HCT116 (cell line): ENCODE measurements at regions of chr10 and their contacts with region 1.

Region 1: DNA sequence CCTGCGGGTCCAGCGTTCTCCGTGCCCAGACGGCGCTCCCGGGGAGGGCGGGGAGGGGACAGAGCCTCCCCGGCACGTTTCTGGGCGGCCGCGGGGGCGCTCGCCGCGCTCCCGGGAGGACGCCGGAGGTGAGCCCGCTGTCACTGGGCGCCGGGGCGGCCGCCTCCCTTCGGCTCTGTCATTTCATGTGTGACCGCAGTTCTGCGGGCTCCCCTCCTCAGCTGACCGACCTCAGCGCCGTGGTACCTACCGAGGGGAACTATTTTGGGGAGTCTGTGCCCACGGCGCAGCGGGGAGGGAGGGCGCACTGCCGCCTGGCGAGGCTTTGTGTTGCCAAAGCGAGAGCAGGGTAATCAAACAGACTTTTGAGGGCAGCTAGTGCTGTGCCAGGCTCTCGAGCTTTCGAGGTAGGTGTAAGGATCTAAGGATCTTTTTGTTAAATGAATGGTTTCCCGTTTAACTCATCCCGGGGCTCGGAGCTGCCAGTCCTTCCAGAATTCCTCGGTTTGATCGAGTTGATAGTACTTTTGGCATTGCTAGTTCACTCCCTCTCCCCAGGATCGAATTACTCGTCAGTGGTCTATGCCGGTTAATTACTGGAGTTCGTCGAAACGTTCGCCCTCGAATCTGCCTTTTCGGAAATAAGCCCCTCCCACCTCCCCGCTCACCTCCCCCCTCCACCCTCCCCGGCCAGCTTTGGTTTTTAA is 1.9 kb downstream of the ARID5B start:
- DNase-seq: peak; percentile 42
- ATAC-seq: peak; percentile 64
- H3K4me3 ChIP-seq: peak overlapping the region; percentile 64 to 75
- H3K27ac ChIP-seq: peak overlapping the region; percentile 92
- H3K4me1 ChIP-seq: peaks cover 13 to 29% of the 10 kb centered on the region in 2 experiments; a peak in 3 of 4 replicates
- H3K27me3 ChIP-seq: no peaks in the 10 kb centered on the region
- CTCF ChIP-seq: peak in 2 of 3 experiments; percentile 23 to 24; a peak in 2 of 6 replicates
- POLR2A ChIP-seq: no peak
- RAD21 ChIP-seq: no peak

Region 2: DNA sequence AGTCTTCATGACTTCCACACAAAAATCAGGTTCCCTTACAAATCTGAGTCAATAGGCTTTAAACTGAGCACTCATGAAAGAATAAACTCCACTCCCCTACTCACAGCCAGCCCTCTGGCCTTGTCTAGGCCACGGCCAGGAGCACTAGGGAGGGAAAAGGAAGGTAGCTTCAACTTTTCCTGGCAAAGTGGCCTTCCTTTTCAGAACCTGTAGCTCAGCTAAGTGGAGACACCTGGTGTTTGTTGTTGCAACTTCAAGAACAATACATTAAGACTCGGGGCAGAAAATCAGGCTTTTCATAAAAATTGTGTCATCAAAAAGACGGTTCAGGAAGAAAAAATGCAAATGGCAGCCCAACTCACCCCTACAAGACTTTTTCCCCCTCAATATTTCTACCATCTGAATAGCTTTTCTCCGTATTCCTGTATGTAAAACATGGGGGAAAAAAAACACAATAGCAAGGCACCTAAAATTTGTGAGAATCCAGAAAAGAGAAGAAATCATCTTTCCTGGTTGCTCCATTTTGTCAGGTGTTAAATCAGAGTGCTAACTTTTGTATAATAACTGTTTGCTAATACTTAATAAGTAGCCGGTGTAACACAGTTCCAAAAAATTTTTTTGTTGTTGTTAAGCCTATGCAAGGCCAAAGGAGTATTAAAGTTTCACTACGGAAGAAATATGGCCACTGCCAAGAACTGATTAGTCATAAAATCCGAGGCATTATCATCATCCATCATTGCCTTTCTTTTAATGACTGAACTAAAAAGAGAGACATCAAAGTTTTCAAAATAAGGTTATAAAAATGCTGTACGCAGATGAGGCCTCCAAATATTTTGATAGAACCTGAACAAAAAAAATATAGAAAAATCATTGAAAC is 68.1 kb before region 1 on chr10:
- CTCF ChIA-PET with region 1: interaction called, 6 read pairs
- POLR2A ChIA-PET with region 1: no interaction called
- RAD21 ChIA-PET with region 1: interaction called in 1 of 2 experiments, 3 read pairs
- intact Hi-C with region 1: loop called (anchors 5 kb)
- DNase-seq: peak; percentile 71
- ATAC-seq: peak; percentile 62
- H3K4me3 ChIP-seq: peak overlapping the region in 1 of 2 experiments; percentile 41; a peak in 1 of 4 replicates
- H3K27ac ChIP-seq: peak overlapping the region; percentile 85; the same call in 1 of the 2 replicates
- H3K4me1 ChIP-seq: peaks cover 32 to 50% of the 10 kb centered on the region in 2 experiments
- H3K27me3 ChIP-seq: no peaks in the 10 kb centered on the region
- CTCF ChIP-seq: peak; percentile 62 to 63 (median 62); a peak in 5 of 6 replicates
- POLR2A ChIP-seq: no peak
- RAD21 ChIP-seq: peak; percentile 80

Region 3: GRCh38 chr10:62268399-62269114 is 365.2 kb after region 1 on chr10 and contains the start of gene RTKN2:
- CTCF ChIA-PET with region 1: no interaction called
- POLR2A ChIA-PET with region 1: no interaction called
- RAD21 ChIA-PET with region 1: no interaction called
- intact Hi-C with region 1: no loop called
- DNase-seq: peak; percentile 74
- ATAC-seq: peak; percentile 88
- H3K4me3 ChIP-seq: peak within 1 kb of the TSS; percentile 80 to 82
- H3K27ac ChIP-seq: peak within 1 kb of the TSS; percentile 44
- H3K4me1 ChIP-seq: peaks cover 3 to 20% of the 10 kb centered on the region in 2 experiments; a peak in 3 of 4 replicates
- H3K27me3 ChIP-seq: no peaks in the 10 kb centered on the region
- CTCF ChIP-seq: no peak
- POLR2A ChIP-seq: peak; percentile 33
- RAD21 ChIP-seq: no peak
- total RNA-seq, gene RTKN2: 7.9 TPM

Region 4: GRCh38 chr10:62594093-62594520 is 690.7 kb after region 1 on chr10:
- CTCF ChIA-PET with region 1: no interaction called
- POLR2A ChIA-PET with region 1: no interaction called
- RAD21 ChIA-PET with region 1: no interaction called
- intact Hi-C with region 1: no loop called
- DNase-seq: peak; percentile 53
- ATAC-seq: peak; percentile 97
- H3K4me3 ChIP-seq: no peak overlapping the region
- H3K27ac ChIP-seq: no peak overlapping the region
- H3K4me1 ChIP-seq: no peaks in the 10 kb centered on the region
- H3K27me3 ChIP-seq: no peaks in the 10 kb centered on the region
- CTCF ChIP-seq: peak; percentile 87 to 96 (median 89)
- POLR2A ChIP-seq: no peak
- RAD21 ChIP-seq: peak; percentile 92